Heart right ventricle (tissue), 16 donors: ENCODE measurements at regions of chr4 and their contacts with region 1.

Region 1: DNA sequence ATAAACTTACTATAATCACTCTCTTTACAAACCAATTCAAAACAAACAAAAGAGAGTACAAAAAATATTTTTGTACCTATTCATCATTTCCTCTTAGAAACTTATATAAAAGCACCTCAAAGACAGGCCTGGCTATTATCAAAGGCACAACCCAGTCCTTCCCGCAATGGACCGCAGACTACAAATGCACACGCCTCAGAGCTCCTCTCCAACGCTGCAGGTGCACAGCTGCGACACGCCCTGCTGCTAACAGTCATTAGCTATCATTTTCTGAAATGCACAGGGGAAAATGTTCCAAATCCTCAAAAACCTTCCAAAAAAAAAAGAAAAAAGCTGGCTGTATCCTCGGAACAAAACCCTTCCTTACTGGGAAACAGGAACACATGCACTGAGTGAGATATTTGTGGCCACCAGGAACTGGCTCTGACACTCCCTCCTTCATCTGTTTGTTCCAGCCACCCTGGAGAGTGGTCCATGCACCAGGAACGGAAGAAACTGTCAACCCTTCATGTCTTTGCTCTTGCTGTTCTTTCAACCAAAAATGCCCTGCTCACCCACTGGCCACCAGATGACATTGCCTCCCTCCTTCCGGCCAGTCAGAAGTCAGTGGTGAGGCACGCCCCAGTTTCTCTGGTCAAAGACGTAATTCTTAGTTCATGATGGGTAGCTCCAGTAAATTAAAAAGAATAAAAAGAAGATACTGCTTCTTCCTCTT is 16.7 kb downstream of the IRF2 start:
- DNase-seq: no peak
- ATAC-seq: peak in 5 of 8 donors; percentile 25 to 56 (median 41)
- H3K4me3 ChIP-seq: no peak overlapping the region
- H3K27ac ChIP-seq: peak overlapping the region in 4 of 10 donors; percentile 3 to 30 (median 16)
- H3K4me1 ChIP-seq: peaks cover 5 to 90% (median 79%) of the 10 kb centered on the region in 9 donors
- H3K27me3 ChIP-seq: no peaks in the 10 kb centered on the region
- CTCF ChIP-seq: no peak

Region 2: GRCh38 chr4:184444953-184445309 is 12.8 kb before region 1 on chr4:
- intact Hi-C with region 1: loop called in 1 of 10 experiments (anchors 1 kb)
- DNase-seq: no peak
- ATAC-seq: peak in 1 of 8 donors; percentile 19
- H3K4me3 ChIP-seq: no peak overlapping the region
- H3K27ac ChIP-seq: peak overlapping the region in 3 of 10 donors; percentile 16 to 89 (median 31)
- H3K4me1 ChIP-seq: peaks cover 31 to 100% (median 95%) of the 10 kb centered on the region in 9 donors
- H3K27me3 ChIP-seq: no peaks in the 10 kb centered on the region
- CTCF ChIP-seq: no peak

Region 3: GRCh38 chr4:185479507-185479971 is 1021.8 kb after region 1 on chr4:
- intact Hi-C with region 1: no loop called
- DNase-seq: no peak
- ATAC-seq: peak in 6 of 8 donors; percentile 23 to 55 (median 42)
- H3K4me3 ChIP-seq: no peak overlapping the region
- H3K27ac ChIP-seq: no peak overlapping the region
- H3K4me1 ChIP-seq: peaks cover 0 to 8% (median 0%) of the 10 kb centered on the region in 9 donors
- H3K27me3 ChIP-seq: no peaks in the 10 kb centered on the region
- CTCF ChIP-seq: no peak